ENCODE measurements at regions of chr3 and their contacts with region 1.

Region 1: GRCh38 chr3:112390783-112391641 is 58.1 kb downstream of the CD200 start:
- DNase-seq: peak in 4 of 10 donors; percentile 8 to 53 (median 40)
- H3K4me3 ChIP-seq: peak overlapping the region in 35 of 59 donors; percentile 1 to 50 (median 22)
- H3K27ac ChIP-seq: peak overlapping the region; percentile 87 to 99 (median 97)
- H3K27me3 ChIP-seq: no peaks in the 10 kb centered on the region
- CTCF ChIP-seq: peak in 10 of 56 donors; percentile 3 to 33 (median 10)

Region 2: GRCh38 chr3:112199619-112200316 is 191.2 kb before region 1 on chr3:
- intact Hi-C with region 1: no loop called
- DNase-seq: no peak
- H3K4me3 ChIP-seq: no peak overlapping the region
- H3K27ac ChIP-seq: no peak overlapping the region
- H3K27me3 ChIP-seq: peaks cover 0 to 5% (median 0%) of the 10 kb centered on the region in 45 donors
- CTCF ChIP-seq: no peak

Region 3: GRCh38 chr3:112350181-112350825 is 40.7 kb before region 1 on chr3:
- intact Hi-C with region 1: loop called in 1 of 2 experiments (anchors 2 kb)
- DNase-seq: no peak
- H3K4me3 ChIP-seq: peak overlapping the region in 10 of 59 donors; percentile 4 to 25 (median 14)
- H3K27ac ChIP-seq: peak overlapping the region in 50 of 59 donors; percentile 3 to 85 (median 54)
- H3K27me3 ChIP-seq: no peaks in the 10 kb centered on the region
- CTCF ChIP-seq: no peak